Cardiac septum (tissue), 1 donor: ENCODE measurements at regions of chr13 and their contacts with region 1.

Region 1: GRCh38 chr13:26985285-26985878 is 186.2 kb downstream of the USP12 start:
- DNase-seq: peak; percentile 44

Region 2: GRCh38 chr13:26721251-26722121 is 263.9 kb before region 1 on chr13:
- intact Hi-C with region 1: no loop called
- DNase-seq: no peak

Region 3: DNA sequence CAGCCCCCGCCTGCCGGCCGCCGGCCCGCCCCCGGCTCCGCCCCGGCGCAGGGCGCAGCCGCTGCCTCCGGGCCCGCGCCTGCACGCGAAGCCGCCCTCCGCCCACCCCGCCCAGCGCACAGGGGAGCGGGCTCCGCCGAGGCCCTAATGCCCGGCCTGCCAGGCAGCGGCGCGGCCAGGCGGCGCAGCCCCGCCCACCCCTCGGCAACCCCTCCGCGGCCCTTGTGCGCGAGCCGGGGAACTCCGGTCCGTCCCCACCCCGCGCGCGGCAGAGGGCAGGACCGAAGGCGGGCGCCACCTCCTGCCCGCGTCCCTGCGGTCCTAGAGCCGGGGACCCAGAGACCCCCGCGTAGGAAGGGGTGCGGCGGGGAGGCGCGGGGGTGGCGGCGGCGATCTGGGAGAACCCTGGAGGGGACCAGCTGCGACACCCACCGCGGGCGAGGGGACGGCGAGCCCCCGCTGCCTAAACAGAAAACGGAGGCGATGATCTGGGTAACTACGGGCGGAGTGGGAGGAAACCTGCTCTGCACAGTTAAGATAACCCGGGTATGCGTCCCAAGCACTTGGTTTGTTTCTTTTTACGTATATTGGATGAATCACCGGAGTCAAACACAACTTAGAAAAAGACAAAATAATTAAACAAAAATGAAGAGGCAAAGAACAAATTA is 186.6 kb after region 1 on chr13:
- intact Hi-C with region 1: loop called (anchors 1 kb)
- DNase-seq: peak; percentile 94

Region 4: DNA sequence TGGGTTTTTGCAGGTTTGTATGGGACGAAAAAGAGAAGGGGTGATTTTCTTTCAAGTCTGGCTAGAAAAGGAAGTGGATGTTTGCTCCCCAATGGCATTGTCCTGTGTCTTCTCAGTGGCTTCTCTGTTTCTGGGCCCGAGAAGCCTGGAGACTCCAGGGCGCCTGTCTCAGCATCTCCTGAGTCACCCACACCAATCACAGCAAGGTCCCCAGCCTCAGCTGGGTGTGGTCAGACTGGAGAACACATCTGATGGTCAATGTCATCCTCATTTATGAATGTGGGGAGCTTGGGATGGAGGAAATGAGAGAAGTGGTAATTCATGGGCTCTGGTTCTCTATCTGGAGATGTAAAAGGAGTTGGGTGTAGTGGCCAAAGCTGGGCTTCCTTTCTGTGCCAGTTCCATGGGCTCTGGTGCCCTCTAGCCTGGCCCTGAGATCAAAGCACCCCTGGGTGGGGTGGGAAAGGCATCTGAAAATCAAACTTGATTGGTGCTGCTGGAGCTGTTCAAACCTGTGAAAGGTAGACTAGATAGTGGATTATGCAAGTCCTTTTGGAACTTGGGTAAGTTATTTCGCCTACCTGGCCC is 298.6 kb after region 1 on chr13:
- intact Hi-C with region 1: loop called (anchors 5 kb)
- DNase-seq: no peak

Region 5: GRCh38 chr13:27826379-27827353 is 841.3 kb after region 1 on chr13:
- intact Hi-C with region 1: loop called (anchors 10 kb)
- DNase-seq: peak; percentile 85